Breast epithelium (tissue), 4 donors: ENCODE measurements at regions of chr10 and their contacts with region 1.

Region 1: DNA sequence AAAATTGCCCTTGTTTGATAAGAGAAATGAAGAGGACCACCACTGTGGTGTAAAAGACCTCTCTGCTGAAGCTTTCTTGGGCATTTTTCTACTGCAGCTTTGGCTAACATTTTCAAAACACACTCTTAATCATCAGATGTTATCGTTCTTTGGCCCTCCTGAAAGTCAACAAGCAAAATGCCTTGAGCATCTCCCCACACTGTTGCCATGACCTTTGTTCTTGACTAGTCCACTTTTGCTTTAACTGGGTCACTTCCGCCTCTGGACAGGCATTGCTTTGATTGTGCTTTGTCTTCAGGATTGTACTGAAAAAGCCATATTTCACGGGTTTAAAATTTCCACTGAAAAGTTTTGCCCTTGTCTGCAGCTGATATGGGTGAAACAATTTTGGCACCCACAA is 107.8 kb upstream of the CXCL12 start:
- DNase-seq: no peak
- H3K4me3 ChIP-seq: no peak overlapping the region
- H3K27ac ChIP-seq: no peak overlapping the region
- H3K4me1 ChIP-seq: no peaks in the 10 kb centered on the region
- H3K27me3 ChIP-seq: no peaks in the 10 kb centered on the region
- CTCF ChIP-seq: no peak
- POLR2A ChIP-seq: no peak

Region 2: DNA sequence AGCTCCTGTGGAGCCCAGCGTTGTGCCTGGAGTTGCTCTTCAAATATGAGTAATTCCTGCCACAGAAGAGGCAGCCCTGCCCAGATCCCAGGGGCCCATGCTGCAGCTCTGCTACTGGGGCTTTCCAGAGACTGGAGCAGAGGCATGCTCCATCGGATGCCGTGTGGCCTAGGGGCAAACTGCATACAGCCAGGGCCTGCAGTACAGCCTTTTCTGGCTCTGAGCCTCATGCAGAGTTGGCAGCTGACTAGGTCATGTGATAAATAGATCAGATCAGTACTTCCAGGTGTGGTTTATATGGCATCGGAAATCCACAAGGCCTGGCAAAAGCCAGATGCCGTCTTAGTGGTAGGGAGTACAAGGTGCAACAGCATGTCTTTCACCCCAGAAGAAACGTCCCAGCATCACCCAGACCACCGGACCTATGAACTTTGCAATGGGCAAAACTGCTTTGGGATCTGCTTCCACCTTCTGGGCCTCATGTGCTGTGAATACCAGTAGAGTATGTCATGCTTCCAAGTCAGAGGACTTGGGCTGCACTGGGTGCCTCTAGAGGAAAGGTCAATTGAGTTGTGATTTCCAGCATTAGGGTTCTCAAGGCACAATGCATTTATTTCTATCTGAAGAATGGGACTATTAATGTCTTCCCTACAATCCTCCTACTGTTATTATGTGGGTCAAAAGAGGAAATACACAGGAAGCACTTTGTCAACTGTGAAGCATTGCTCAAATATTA is 593.3 kb before region 1 on chr10:
- intact Hi-C with region 1: loop called (anchors 5 kb)
- DNase-seq: peak in 1 of 2 donors; percentile 23
- H3K4me3 ChIP-seq: no peak overlapping the region
- H3K27ac ChIP-seq: no peak overlapping the region
- H3K4me1 ChIP-seq: no peaks in the 10 kb centered on the region
- H3K27me3 ChIP-seq: no peaks in the 10 kb centered on the region
- CTCF ChIP-seq: no peak
- POLR2A ChIP-seq: no peak